ENCODE measurements at regions of chr5 and their contacts with region 1.

Region 1: GRCh38 chr5:157550663-157551062 is 24.9 kb downstream of the ADAM19 start:
- DNase-seq: no peak
- H3K4me3 ChIP-seq: no peak overlapping the region
- H3K27ac ChIP-seq: no peak overlapping the region
- H3K4me1 ChIP-seq: peaks cover 39% of the 10 kb centered on the region
- H3K27me3 ChIP-seq: no peaks in the 10 kb centered on the region
- CTCF ChIP-seq: no peak

Region 2: DNA sequence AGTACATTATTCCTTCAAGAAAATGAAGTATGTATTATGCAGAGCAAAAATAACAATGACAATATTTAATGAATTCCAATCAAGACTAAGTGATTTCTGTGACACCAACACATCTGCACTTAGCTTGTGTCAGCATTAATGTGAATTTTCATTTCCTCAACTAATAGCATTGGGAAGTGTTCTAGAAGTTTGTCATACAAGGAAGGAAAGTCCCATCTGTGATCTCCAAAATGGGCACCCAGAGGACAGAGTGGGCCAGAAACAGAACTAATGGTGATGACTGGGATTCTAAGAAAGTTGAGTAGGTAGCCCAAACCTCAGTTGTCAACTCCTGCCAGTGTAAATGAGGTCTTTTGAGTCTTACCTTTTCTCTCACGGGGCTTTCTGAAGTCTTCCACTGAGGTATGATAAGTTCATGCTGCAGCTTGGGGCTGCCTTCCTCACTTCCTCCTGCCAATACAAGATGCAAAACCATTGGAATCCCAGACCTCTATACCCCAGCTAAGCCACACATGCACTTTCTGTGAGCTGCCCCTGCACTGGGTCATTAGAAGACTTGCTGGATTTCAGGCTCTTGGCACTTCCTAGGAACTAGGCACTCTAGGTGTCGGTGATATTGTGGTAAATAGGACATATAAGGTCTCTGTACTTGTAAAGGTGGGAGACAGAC is 20.0 kb after region 1 on chr5:
- CTCF ChIA-PET with region 1: no interaction called
- dilution Hi-C with region 1: no loop called
- in situ Hi-C with region 1: no loop called
- intact Hi-C with region 1: loop called (anchors 1 kb)
- DNase-seq: no peak
- H3K4me3 ChIP-seq: no peak overlapping the region
- H3K27ac ChIP-seq: no peak overlapping the region
- H3K4me1 ChIP-seq: peaks cover 13% of the 10 kb centered on the region
- H3K27me3 ChIP-seq: no peaks in the 10 kb centered on the region
- CTCF ChIP-seq: no peak

Region 3: DNA sequence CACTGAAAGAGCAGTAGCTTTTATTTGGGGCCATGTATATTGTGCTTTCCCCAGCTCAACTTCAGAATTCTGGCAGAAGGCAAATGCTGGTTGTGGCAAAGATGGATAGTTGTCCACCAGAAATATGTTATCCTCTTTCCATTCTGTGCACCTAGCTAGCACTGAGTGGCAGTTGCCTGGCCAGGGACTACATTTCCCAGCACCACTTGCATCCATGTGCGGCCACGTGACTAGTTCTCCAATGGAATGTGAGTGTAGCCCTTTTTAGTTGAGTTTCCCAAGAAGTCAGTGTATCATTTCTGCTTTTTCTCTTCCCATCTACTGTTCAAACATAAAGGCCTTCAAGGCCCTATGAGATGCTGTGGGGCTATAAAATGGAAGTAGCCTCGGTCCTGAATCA is 662.3 kb after region 1 on chr5:
- CTCF ChIA-PET with region 1: no interaction called
- dilution Hi-C with region 1: no loop called
- in situ Hi-C with region 1: no loop called
- intact Hi-C with region 1: no loop called
- DNase-seq: no peak
- H3K4me3 ChIP-seq: no peak overlapping the region
- H3K27ac ChIP-seq: no peak overlapping the region
- H3K4me1 ChIP-seq: no peaks in the 10 kb centered on the region
- H3K27me3 ChIP-seq: no peaks in the 10 kb centered on the region
- CTCF ChIP-seq: no peak

Measured in mammary epithelial cell (primary cell).